Astrocyte of the cerebellum (primary cell): ENCODE measurements at regions of chr20 and their contacts with region 1.

Region 1: GRCh38 chr20:63475206-63475605 is 2.8 kb upstream of the KCNQ2 start:
- DNase-seq: no peak
- H3K4me3 ChIP-seq: no peak overlapping the region
- CTCF ChIP-seq: no peak

Region 2: DNA sequence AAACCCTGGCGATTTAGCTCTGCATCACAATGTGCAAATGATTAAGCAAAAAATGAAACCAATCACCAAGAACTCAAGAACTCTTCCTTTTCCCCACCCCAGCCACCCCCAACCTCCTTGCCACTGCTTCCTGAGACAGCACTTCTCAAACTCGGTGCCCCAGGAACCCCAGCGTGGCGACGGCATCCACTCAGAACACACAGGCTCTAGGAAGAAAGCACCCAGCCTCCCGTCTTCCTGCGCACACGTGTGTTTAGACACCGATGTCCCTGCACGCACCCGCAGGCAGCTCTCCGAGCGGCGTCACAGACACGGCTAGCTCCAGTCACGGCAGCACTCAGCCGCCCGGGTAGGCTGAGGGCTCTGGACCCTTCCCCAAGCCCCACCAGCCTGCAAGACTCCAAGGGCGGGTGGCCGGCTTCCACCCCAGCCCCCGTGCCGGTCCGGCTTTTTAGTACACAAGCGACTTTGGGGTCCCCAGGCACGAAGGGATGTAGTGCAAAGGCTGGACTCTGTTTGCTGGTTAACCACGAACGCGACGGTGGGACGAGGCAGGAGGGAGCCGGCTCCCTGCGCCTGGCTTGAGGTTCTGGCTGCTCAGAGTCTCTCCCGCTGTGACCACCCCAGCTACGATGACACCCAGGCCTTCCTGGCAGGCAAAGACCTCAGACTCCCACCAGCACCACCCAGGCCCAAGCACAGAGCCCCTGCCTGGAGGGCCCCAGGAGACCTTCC is 54.7 kb before region 1 on chr20:
- in situ Hi-C with region 1: loop called (anchors 5 kb)
- DNase-seq: no peak
- H3K4me3 ChIP-seq: no peak overlapping the region
- CTCF ChIP-seq: no peak

Region 3: GRCh38 chr20:63664861-63665716 is 189.9 kb after region 1 on chr20:
- in situ Hi-C with region 1: no loop called
- DNase-seq: no peak
- H3K4me3 ChIP-seq: no peak overlapping the region
- CTCF ChIP-seq: no peak